ENCODE measurements at regions of chr11 and their contacts with region 1.

Region 1: GRCh38 chr11:62753736-62754603 is at the start of gene ZBTB3:
- DNase-seq: peak; percentile 92 to 100 (median 97)
- ATAC-seq: peak; percentile 93
- H3K4me3 ChIP-seq: peak within 1 kb of the TSS; percentile 80
- H3K4me3 Mint-ChIP-seq: peak within 1 kb of the TSS; percentile 93
- H3K27ac ChIP-seq: peak within 1 kb of the TSS; percentile 84 to 88
- H3K27ac Mint-ChIP-seq: peak within 1 kb of the TSS; percentile 89
- H3K4me1 ChIP-seq: peaks cover 41% of the 10 kb centered on the region
- H3K4me1 Mint-ChIP-seq: peaks cover 35% of the 10 kb centered on the region
- H3K27me3 ChIP-seq: no peaks in the 10 kb centered on the region
- H3K27me3 Mint-ChIP-seq: no peaks in the 10 kb centered on the region
- CTCF ChIP-seq: no peak
- total RNA-seq, gene ZBTB3: 2.3 to 3.5 TPM

Region 2: DNA sequence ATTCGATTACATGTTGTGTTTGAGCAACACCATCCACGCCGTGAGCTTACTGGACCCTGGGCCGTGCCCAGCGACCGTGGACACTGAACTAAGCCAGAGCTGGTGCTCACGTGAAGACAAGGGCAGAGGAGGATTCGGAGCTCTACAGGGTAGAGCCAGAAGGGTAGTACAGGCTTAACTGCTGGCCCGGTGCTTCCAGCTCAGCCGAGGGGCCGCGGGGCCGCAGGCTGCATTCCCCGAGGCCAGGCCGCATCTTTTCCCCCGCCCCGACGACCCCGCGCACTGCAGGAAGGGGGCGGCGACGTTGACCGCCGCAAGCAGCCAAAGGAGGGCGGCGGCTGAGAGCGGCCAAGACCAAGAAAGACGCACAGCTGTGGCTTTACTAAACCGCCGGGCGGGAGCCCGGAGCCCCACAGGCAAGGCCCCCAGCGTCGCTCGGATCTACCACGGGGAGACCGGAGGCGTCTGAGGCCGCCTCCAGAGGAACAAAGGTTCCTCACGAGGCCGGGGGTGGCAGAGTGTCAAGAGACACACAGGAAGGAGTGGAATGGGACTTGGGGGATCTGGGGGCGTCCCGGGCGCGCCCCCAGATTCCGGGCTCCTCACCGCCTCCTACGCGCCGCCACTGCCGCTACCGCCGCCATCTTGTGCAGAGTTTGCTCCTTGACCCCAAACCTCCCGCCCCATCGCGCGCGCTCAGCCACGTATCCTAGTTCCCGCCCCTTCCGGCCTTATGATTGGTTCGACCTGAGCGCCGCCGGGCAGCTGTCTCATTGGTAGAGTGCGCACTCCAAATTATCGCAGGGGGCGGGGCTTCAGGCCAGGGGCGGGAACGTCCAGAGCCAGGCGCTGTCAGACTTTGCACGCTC is 107.8 kb before region 1 on chr11 and contains the start of gene GANAB:
- CTCF ChIA-PET with region 1: no interaction called
- POLR2A ChIA-PET with region 1: interaction called, 12 read pairs
- intact Hi-C with region 1: no loop called
- DNase-seq: peak; percentile 97 to 100 (median 99)
- ATAC-seq: peak; percentile 98
- H3K4me3 ChIP-seq: peak within 1 kb of the TSS; percentile 98
- H3K4me3 Mint-ChIP-seq: peak within 1 kb of the TSS; percentile 96
- H3K27ac ChIP-seq: peak within 1 kb of the TSS; percentile 82 to 97
- H3K27ac Mint-ChIP-seq: peak within 1 kb of the TSS; percentile 99
- H3K4me1 ChIP-seq: peaks cover 42% of the 10 kb centered on the region
- H3K4me1 Mint-ChIP-seq: peaks cover 29% of the 10 kb centered on the region
- H3K27me3 ChIP-seq: no peaks in the 10 kb centered on the region
- H3K27me3 Mint-ChIP-seq: no peaks in the 10 kb centered on the region
- CTCF ChIP-seq: no peak
- total RNA-seq, gene GANAB: 181 to 182 TPM

Region 3: DNA sequence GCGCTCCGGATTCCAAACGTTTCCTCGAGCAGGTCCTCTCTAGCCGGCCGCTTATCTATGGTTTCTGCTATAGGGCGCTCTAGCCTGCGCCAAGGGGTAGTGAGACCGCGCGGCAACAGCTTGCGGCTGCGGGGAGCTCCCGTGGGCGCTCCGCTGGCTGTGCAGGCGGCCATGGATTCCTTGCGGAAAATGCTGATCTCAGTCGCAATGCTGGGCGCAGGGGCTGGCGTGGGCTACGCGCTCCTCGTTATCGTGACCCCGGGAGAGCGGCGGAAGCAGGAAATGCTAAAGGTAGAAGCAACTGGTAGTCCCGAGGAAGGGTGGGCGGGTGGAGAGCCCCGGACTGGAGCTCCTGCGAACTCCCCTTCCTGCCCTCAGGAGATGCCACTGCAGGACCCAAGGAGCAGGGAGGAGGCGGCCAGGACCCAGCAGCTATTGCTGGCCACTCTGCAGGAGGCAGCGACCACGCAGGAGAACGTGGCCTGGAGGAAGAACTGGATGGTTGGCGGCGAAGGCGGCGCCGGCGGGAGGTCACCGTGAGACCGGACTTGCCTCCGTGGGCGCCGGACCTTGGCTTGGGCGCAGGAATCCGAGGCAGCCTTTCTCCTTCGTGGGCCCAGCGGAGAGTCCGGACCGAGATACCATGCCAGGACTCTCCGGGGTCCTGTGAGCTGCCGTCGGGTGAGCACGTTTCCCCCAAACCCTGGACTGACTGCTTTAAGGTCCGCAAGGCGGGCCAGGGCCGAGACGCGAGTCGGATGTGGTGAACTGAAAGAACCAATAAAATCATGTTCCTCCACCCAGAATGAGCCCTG is 82.2 kb before region 1 on chr11 and contains the starts of genes LBHD1 and UQCC3:
- CTCF ChIA-PET with region 1: no interaction called
- POLR2A ChIA-PET with region 1: interaction called, 30 read pairs
- intact Hi-C with region 1: no loop called
- DNase-seq: peak; percentile 50 to 89 (median 68)
- ATAC-seq: peak; percentile 74
- H3K4me3 ChIP-seq: peak within 1 kb of the TSS; percentile 98
- H3K4me3 Mint-ChIP-seq: peak within 1 kb of the TSS; percentile 91
- H3K27ac ChIP-seq: peak within 1 kb of the TSS; percentile 72 to 83
- H3K27ac Mint-ChIP-seq: peak within 1 kb of the TSS; percentile 87
- H3K4me1 ChIP-seq: peaks cover 55% of the 10 kb centered on the region
- H3K4me1 Mint-ChIP-seq: peaks cover 53% of the 10 kb centered on the region
- H3K27me3 ChIP-seq: no peaks in the 10 kb centered on the region
- H3K27me3 Mint-ChIP-seq: no peaks in the 10 kb centered on the region
- CTCF ChIP-seq: no peak
- total RNA-seq, gene LBHD1: 10.4 to 10.5 TPM
- total RNA-seq, gene UQCC3: 1.5 to 2.3 TPM

Region 4: DNA sequence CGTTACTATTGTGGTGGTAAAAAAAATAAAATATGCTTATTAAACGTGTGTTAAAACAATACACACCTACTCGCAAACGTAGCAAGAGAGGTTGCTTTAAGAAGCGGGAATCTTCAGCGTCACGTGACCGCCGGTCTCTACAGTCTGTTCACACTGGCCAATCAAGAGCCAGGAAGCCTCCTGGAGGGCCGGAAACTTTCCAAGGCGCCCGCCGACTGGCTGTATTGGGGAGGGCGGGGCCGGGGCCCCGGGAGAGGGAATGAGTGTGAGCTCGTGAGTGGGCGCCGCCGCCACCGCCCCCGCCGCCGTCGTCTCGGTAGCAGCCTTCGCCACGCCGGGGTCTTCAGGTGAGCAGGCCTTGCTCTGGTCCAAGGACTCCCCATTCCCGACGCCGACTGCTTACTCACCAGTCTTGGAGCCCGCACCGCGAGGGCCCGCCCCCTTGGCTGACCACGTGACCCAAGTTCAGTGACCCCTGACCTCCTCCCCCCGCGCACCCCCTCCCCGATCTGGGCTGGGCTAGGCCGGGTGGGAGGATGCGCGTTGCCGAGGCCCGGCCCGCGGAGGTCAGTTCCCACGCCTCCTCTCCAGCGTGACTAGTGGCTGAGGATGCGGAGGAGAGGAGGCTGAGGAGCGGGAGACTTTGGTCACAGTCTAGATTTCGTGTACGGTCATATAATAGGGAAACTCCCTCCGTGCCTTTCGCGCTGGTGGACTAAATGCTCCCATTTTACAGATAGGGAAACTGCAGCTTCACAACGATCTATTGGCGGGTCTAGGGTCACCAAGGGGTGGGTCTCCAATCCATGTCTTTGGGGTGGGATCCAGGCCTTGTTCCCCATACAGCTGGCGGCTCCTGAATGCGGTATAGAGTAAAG is 17.4 kb after region 1 on chr11 and contains the start of gene TAF6L:
- CTCF ChIA-PET with region 1: interaction called, 6 read pairs
- POLR2A ChIA-PET with region 1: interaction called, 61 read pairs
- intact Hi-C with region 1: no loop called
- DNase-seq: peak; percentile 81 to 95 (median 88)
- ATAC-seq: peak; percentile 76
- H3K4me3 ChIP-seq: peak within 1 kb of the TSS; percentile 76
- H3K4me3 Mint-ChIP-seq: peak within 1 kb of the TSS; percentile 97
- H3K27ac ChIP-seq: peak within 1 kb of the TSS; percentile 79 to 88
- H3K27ac Mint-ChIP-seq: peak within 1 kb of the TSS; percentile 97
- H3K4me1 ChIP-seq: peaks cover 27% of the 10 kb centered on the region
- H3K4me1 Mint-ChIP-seq: peaks cover 24% of the 10 kb centered on the region
- H3K27me3 ChIP-seq: no peaks in the 10 kb centered on the region
- H3K27me3 Mint-ChIP-seq: no peaks in the 10 kb centered on the region
- CTCF ChIP-seq: no peak
- total RNA-seq, gene TAF6L: 11.5 to 11.8 TPM

Region 5: DNA sequence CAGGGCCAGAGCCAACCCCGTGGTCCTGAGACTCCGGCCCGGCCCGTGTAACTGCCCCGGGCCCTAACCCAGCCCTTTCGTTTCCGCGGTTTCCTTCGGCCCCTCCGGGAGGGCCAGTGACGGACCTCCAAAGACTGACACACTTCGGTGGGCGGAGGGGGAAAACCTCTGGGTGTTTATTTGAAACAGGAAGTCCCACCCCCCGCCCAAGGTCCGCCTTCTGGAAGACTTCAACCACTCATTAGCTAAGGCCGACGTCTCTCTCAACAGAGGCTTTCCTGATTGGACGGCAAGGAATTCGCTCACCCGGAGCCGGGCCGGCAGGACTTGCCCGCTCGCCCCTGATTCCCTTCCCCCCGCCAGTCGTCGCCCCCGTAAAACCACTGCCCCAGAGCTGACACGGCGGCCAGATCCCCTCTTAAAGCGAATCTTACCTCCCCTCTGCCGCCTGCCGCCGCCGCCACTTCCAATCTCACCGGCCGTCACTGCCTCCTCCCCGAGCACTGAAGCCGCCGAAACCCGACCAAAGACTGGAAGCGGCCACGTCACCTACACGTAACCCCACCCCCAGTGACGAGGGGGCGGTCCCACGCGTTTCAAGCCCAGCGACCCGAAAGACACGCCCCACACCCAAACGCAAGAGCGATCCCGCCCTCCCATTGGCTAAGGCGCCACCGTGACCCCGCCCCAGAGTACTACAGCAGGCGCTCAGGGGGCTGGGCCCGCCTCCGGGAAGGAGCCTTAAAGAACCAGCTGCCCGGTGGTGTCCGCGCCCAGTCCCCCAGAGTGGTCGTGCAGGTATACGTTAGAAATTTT is 77.8 kb after region 1 on chr11 and contains the start of gene STX5:
- CTCF ChIA-PET with region 1: no interaction called
- POLR2A ChIA-PET with region 1: interaction called, 23 read pairs
- intact Hi-C with region 1: no loop called
- DNase-seq: peak; percentile 99 to 100 (median 99)
- ATAC-seq: peak; percentile 95
- H3K4me3 ChIP-seq: peak within 1 kb of the TSS; percentile 86
- H3K4me3 Mint-ChIP-seq: peak within 1 kb of the TSS; percentile 92
- H3K27ac ChIP-seq: peak within 1 kb of the TSS; percentile 95 to 97
- H3K27ac Mint-ChIP-seq: peak within 1 kb of the TSS; percentile 95
- H3K4me1 ChIP-seq: peaks cover 44% of the 10 kb centered on the region
- H3K4me1 Mint-ChIP-seq: peaks cover 40% of the 10 kb centered on the region
- H3K27me3 ChIP-seq: no peaks in the 10 kb centered on the region
- H3K27me3 Mint-ChIP-seq: no peaks in the 10 kb centered on the region
- CTCF ChIP-seq: no peak
- total RNA-seq, gene STX5: 93.1 to 104 TPM

Region 6: DNA sequence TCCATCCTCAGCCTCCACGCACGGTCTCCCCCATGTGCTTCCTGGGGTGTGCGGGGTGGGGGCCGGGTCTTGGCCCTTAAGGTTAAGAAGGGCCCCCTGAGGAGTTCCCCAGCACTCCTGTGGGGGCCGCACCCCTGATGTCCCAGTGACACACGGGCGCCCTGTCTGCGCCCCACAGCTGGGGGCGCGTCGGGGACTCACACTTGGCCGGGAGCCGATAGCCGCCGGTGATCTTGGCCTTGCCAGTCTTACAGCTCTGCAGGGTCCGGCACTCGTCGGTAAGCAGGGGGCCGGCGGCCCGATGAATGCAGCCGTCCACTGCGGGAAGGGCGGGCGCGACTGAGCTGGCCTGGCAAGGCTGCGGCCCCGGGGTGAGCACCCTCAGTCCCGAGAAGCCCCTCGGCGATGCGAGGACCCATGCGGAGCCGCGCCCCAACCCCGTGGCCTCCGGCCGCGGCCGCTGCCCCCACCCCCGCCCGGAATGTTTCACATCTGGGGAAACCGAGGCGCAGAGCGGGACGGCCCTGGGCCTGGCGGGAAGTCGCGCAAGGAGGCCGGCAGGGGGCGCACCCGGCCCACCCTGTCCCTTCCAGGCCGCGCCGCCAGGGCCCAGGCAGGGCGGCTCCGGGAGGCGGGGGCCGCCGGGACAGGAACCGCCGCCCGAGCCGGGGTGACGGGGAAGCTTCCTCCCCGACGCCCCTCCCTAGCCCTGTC is 1246.2 kb after region 1 on chr11:
- CTCF ChIA-PET with region 1: no interaction called
- POLR2A ChIA-PET with region 1: no interaction called
- intact Hi-C with region 1: no loop called
- DNase-seq: peak; percentile 53 to 91 (median 70)
- ATAC-seq: peak; percentile 76
- H3K4me3 ChIP-seq: peak overlapping the region; percentile 41
- H3K4me3 Mint-ChIP-seq: peak overlapping the region; percentile 11
- H3K27ac ChIP-seq: no peak overlapping the region
- H3K27ac Mint-ChIP-seq: no peak overlapping the region
- H3K4me1 ChIP-seq: peaks cover 28% of the 10 kb centered on the region
- H3K4me1 Mint-ChIP-seq: peaks cover 9% of the 10 kb centered on the region
- H3K27me3 ChIP-seq: peaks cover 0 to 3% of the 10 kb centered on the region in 2 experiments
- H3K27me3 Mint-ChIP-seq: no peaks in the 10 kb centered on the region
- CTCF ChIP-seq: peak; percentile 75

Measured in CD4-positive, alpha-beta T cell (primary cell).